Upper lobe of right lung (tissue), 1 donor: ENCODE measurements at regions of chr16 and their contacts with region 1.

Region 1: DNA sequence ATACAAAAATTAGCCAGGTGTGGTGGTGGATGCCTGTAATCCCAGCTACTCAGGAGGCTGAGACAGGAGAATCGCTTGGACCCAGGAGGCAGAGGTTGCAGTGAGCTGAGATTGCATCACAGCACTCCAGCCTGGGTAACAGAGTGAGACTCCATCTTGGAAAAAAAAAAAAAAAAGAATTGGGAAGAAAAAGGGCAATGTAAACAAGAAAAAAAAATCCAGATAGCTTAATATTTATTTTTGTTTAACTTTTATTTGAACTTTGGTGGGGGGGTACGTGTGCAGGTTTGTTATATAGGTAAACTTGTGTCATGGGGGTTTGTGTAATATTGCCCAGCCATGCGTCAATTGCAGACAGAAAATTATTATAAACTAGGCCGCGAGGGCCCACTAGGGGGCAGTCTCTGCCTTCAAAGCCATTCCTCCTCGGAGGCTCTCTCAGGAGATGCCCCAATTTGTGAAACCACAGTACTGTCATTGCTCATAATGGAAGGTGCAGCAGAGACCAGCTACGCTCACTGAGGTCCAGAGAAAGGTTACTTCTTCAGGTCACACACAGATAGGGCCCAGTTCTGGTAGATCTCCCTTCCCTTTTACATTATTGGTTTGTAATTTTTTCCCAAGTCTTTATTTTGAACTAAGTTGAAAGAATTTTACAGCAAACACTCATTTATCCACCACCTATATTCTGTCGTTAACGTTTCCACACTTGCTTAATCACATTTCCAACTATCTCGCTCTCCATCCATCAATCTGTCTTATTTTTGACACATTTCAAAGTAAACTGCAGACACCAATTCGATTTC is 206.2 kb downstream of the PRKCB start:
- DNase-seq: peak; percentile 67
- ATAC-seq: peak; percentile 86
- H3K4me3 ChIP-seq: no peak overlapping the region
- H3K27ac ChIP-seq: no peak overlapping the region
- H3K4me1 ChIP-seq: no peaks in the 10 kb centered on the region
- H3K27me3 ChIP-seq: no peaks in the 10 kb centered on the region
- CTCF ChIP-seq: peak; percentile 78

Region 2: GRCh38 chr16:24504472-24505345 is 462.7 kb after region 1 on chr16:
- intact Hi-C with region 1: loop called (anchors 10 kb)
- DNase-seq: no peak
- ATAC-seq: peak; percentile 94
- H3K4me3 ChIP-seq: no peak overlapping the region
- H3K27ac ChIP-seq: no peak overlapping the region
- H3K4me1 ChIP-seq: no peaks in the 10 kb centered on the region
- H3K27me3 ChIP-seq: peaks cover 14% of the 10 kb centered on the region
- CTCF ChIP-seq: peak; percentile 73